GM12878 (cell line): ENCODE measurements at regions of chr4 and their contacts with region 1.

Region 1: GRCh38 chr4:123564758-123565346 is 168.3 kb downstream of the SPRY1 start:
- DNase-seq: peak; percentile 43
- ATAC-seq: peak; percentile 100
- H3K4me3 ChIP-seq: no peak overlapping the region
- H3K27ac ChIP-seq: no peak overlapping the region
- H3K4me1 ChIP-seq: no peaks in the 10 kb centered on the region
- H3K27me3 ChIP-seq: no peaks in the 10 kb centered on the region
- CTCF ChIP-seq: peak; percentile 94 to 99 (median 95)
- EP300 ChIP-seq: no peak
- POLR2A ChIP-seq: no peak
- RAD21 ChIP-seq: peak; percentile 86

Region 2: GRCh38 chr4:122673252-122673651 is 891.6 kb before region 1 on chr4:
- CTCF ChIA-PET with region 1: no interaction called
- POLR2A ChIA-PET with region 1: no interaction called
- RAD21 ChIA-PET with region 1: no interaction called
- SMC1A ChIA-PET with region 1: no interaction called
- in situ Hi-C with region 1: no loop called
- intact Hi-C with region 1: no loop called
- DNase-seq: no peak
- ATAC-seq: no peak
- H3K4me3 ChIP-seq: no peak overlapping the region
- H3K27ac ChIP-seq: no peak overlapping the region
- H3K4me1 ChIP-seq: no peaks in the 10 kb centered on the region
- H3K27me3 ChIP-seq: no peaks in the 10 kb centered on the region; a peak in 1 of 4 replicates
- CTCF ChIP-seq: no peak
- EP300 ChIP-seq: no peak
- POLR2A ChIP-seq: no peak
- RAD21 ChIP-seq: no peak

Region 3: DNA sequence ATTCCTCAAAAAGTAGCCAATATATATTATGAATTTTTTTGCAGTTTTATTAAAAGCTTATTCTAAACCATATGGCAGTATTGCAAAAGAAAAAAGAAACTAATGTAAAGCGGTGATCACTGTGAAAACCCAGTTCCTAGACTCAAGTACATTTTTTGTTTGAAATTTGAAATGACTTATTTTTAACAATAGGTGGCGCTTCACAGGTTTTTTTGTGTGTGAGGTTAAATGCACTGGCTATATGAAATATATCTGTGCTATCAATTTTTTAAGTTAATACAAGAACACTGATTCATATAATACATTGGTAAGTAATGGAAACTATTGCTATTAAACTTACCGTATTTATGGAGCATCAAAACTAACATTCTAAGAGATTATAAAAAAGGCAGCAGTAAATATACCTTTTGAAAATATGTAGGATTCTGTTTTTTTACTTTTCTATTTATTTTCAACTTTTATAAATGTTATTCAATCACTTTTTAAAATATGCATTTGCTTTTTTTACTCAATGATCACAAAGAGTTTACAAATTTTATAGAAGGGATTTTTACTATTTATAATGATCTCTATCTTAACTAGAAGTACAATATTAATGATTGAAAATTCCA is 173.9 kb before region 1 on chr4:
- CTCF ChIA-PET with region 1: interaction called, 27 read pairs
- POLR2A ChIA-PET with region 1: interaction called, 3 read pairs
- RAD21 ChIA-PET with region 1: interaction called, 17 read pairs
- SMC1A ChIA-PET with region 1: interaction called, 19 read pairs
- in situ Hi-C with region 1: no loop called
- intact Hi-C with region 1: loop called (anchors 2 kb)
- DNase-seq: no peak
- ATAC-seq: peak; percentile 70
- H3K4me3 ChIP-seq: no peak overlapping the region
- H3K27ac ChIP-seq: no peak overlapping the region
- H3K4me1 ChIP-seq: no peaks in the 10 kb centered on the region
- H3K27me3 ChIP-seq: no peaks in the 10 kb centered on the region; a peak in 2 of 4 replicates
- CTCF ChIP-seq: peak; percentile 33 to 52 (median 46); a peak in 5 of 6 replicates
- EP300 ChIP-seq: no peak
- POLR2A ChIP-seq: no peak
- RAD21 ChIP-seq: peak; percentile 60

Region 4: DNA sequence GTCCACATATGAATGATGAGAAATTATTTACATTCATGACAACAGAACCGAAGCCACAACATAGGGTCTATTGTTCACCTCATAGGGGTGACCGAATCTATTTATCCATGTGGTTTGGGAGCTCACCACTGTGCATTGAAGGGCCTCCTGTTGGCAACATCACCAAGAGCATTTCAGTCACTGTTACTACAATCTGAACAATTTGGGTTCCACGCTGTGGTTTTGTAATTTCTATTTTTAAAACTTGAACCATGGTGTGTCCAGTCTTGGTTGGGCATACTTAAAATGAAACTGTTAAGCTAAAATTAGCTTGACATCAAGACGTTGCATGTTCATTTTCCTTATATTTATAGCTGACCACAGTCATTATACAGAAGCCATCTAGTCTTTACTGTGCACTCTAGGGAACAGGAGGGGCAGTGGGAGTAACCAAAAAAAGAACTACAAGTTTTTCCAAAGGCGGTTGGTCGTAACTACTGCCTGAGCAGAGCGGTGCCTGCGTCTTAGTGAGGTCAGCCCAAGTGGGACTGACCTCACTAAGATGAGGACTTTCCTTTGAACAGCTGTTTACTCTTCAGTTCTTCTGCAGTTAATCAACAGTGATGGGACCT is 23.9 kb after region 1 on chr4:
- CTCF ChIA-PET with region 1: interaction called, 19 read pairs
- POLR2A ChIA-PET with region 1: no interaction called
- RAD21 ChIA-PET with region 1: interaction called, 9 read pairs
- SMC1A ChIA-PET with region 1: interaction called, 26 read pairs
- in situ Hi-C with region 1: no loop called
- intact Hi-C with region 1: no loop called
- DNase-seq: peak; percentile 84
- ATAC-seq: peak; percentile 95
- H3K4me3 ChIP-seq: peak overlapping the region; percentile 4; the same call in 1 of the 2 replicates
- H3K27ac ChIP-seq: no peak overlapping the region
- H3K4me1 ChIP-seq: peaks cover 9% of the 10 kb centered on the region
- H3K27me3 ChIP-seq: no peaks in the 10 kb centered on the region
- CTCF ChIP-seq: no peak
- EP300 ChIP-seq: peak; percentile 85 to 86
- POLR2A ChIP-seq: no peak
- RAD21 ChIP-seq: 0 out of 2 replicates have a peak, but pooled peaks have one; percentile 0

Region 5: GRCh38 chr4:123661080-123661737 is 96.4 kb after region 1 on chr4:
- CTCF ChIA-PET with region 1: interaction called, 85 read pairs
- POLR2A ChIA-PET with region 1: no interaction called
- RAD21 ChIA-PET with region 1: interaction called, 45 read pairs
- SMC1A ChIA-PET with region 1: interaction called, 68 read pairs
- in situ Hi-C with region 1: no loop called
- intact Hi-C with region 1: loop called (anchors 1 kb)
- DNase-seq: no peak
- ATAC-seq: no peak
- H3K4me3 ChIP-seq: no peak overlapping the region
- H3K27ac ChIP-seq: no peak overlapping the region
- H3K4me1 ChIP-seq: no peaks in the 10 kb centered on the region
- H3K27me3 ChIP-seq: peaks cover 0 to 2% of the 10 kb centered on the region in 2 experiments; a peak in 1 of 4 replicates
- CTCF ChIP-seq: peak in 2 of 3 experiments; percentile 21 to 38; a peak in 3 of 6 replicates
- EP300 ChIP-seq: no peak
- POLR2A ChIP-seq: no peak
- RAD21 ChIP-seq: peak; percentile 51

Region 6: DNA sequence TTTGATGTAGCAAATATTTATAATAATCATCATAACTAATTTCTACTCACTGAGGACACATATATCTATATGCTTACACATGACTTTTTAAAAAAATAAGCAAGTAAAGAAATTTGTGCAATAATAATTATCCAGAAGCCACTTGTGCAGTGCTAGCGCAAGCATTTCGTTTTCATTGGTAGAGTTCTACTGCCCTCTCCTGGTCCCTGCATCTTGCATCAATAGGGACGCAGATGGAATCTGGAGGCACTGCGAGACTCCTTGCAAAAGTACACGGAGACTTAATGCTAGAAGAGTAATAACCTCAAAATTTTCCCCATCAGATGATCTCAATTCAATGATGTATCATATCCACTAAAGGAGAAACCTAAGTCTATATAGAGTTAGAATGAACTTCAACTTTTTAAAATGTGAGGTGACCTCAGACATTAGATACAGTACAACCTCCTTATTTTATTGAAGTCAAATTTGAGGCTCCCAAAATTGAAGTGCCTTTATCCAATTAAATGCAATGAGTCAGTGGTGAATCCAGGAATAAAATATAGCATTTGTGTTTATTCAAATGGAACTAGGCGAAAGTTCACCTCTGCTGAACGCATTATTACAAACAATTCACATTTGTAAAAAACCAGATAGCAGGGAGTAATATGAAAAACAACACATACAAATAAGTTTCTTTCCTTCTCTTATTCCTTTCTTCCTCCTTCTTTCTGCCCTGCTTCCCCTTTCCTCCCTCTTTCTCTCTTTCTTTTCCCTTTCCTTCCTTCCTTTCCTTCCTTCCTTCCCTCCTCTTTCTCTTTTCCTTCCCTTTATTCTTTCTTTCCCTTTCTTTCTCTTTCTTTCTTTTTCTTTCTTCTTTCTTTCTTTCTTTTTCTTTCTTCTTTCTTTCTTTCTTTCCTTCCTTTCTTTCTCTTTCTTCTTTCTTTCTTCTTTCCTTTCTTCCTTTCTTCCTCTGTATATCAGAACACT is 697.6 kb after region 1 on chr4:
- CTCF ChIA-PET with region 1: no interaction called
- POLR2A ChIA-PET with region 1: no interaction called
- RAD21 ChIA-PET with region 1: no interaction called
- SMC1A ChIA-PET with region 1: no interaction called
- in situ Hi-C with region 1: no loop called
- intact Hi-C with region 1: loop called (anchors 5 kb)
- DNase-seq: peak; percentile 11
- ATAC-seq: peak; percentile 88
- H3K4me3 ChIP-seq: no peak overlapping the region
- H3K27ac ChIP-seq: no peak overlapping the region
- H3K4me1 ChIP-seq: no peaks in the 10 kb centered on the region
- H3K27me3 ChIP-seq: no peaks in the 10 kb centered on the region
- CTCF ChIP-seq: peak; percentile 69 to 82 (median 74)
- EP300 ChIP-seq: no peak
- POLR2A ChIP-seq: no peak
- RAD21 ChIP-seq: peak; percentile 90